Testis (tissue), 5 donors: ENCODE measurements at regions of chr11 and their contacts with region 1.

Region 1: GRCh38 chr11:32176223-32176934 is 85.5 kb downstream of the RCN1 start:
- DNase-seq: peak; percentile 92
- H3K4me3 ChIP-seq: no peak overlapping the region
- H3K27ac ChIP-seq: no peak overlapping the region
- H3K4me1 ChIP-seq: no peaks in the 10 kb centered on the region
- H3K27me3 ChIP-seq: no peaks in the 10 kb centered on the region
- CTCF ChIP-seq: peak; percentile 73 to 92 (median 84)
- POLR2A ChIP-seq: no peak

Region 2: DNA sequence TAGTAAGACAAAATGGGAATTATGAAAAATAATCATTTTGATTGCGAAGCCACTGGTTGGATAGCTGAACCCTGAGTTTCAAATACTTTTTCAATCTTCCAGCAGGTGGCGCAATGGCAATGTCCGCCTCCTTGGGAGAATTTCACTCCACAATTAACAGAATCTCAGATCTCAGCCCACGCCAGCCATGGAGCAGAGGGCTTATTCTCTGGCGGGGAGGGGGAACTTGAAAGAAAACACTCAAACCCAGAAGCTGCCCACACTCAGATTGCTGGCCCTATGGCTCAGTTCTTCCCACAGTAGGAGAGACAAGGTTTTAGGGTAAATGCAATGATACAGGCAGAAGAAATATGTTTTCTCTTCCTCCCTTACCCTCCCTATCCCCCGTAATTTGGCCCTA is 124.2 kb before region 1 on chr11:
- intact Hi-C with region 1: loop called (anchors 5 kb)
- DNase-seq: peak; percentile 70
- H3K4me3 ChIP-seq: no peak overlapping the region
- H3K27ac ChIP-seq: no peak overlapping the region
- H3K4me1 ChIP-seq: no peaks in the 10 kb centered on the region
- H3K27me3 ChIP-seq: no peaks in the 10 kb centered on the region
- CTCF ChIP-seq: peak; percentile 79 to 85 (median 81)
- POLR2A ChIP-seq: no peak

Region 3: DNA sequence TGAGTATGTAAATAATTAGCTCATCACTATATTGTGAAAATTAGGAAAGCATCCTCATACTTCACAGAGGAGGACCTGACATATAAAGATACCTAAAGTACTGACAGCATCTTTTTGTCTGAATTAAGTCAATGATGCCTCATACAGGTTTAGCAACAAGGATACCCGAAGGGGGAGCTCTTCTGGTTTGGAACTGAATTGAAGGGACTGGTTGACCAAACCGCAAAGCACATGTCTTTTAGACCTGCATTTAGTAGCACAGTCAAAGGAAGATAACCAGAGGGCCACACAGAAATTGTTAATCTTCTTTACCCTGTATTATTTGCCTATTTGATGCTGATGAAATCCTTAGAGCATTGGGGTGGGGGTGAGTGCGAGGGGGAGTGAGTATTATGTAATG is 271.9 kb after region 1 on chr11:
- intact Hi-C with region 1: no loop called
- DNase-seq: no peak
- H3K4me3 ChIP-seq: no peak overlapping the region
- H3K27ac ChIP-seq: no peak overlapping the region
- H3K4me1 ChIP-seq: peaks cover 3% of the 10 kb centered on the region
- H3K27me3 ChIP-seq: no peaks in the 10 kb centered on the region
- CTCF ChIP-seq: no peak
- POLR2A ChIP-seq: no peak